ENCODE measurements at regions of chr1 and their contacts with region 1.

Region 1: GRCh38 chr1:214002472-214002871 is 14.7 kb downstream of the PROX1 start:
- DNase-seq: peak; percentile 58
- H3K4me3 Mint-ChIP-seq: no peak overlapping the region
- H3K27ac Mint-ChIP-seq: no peak overlapping the region
- H3K4me1 Mint-ChIP-seq: peaks cover 6% of the 10 kb centered on the region
- H3K27me3 Mint-ChIP-seq: peaks cover 55% of the 10 kb centered on the region
- CTCF ChIP-seq: no peak

Region 2: GRCh38 chr1:213772128-213773063 is 230.1 kb before region 1 on chr1:
- CTCF ChIA-PET with region 1: no interaction called
- POLR2A ChIA-PET with region 1: no interaction called
- intact Hi-C with region 1: no loop called
- DNase-seq: no peak
- H3K4me3 Mint-ChIP-seq: no peak overlapping the region
- H3K27ac Mint-ChIP-seq: no peak overlapping the region
- H3K4me1 Mint-ChIP-seq: no peaks in the 10 kb centered on the region
- H3K27me3 Mint-ChIP-seq: peaks cover 43% of the 10 kb centered on the region
- CTCF ChIP-seq: no peak

Region 3: GRCh38 chr1:213934642-213935041 is 67.8 kb before region 1 on chr1:
- CTCF ChIA-PET with region 1: no interaction called
- POLR2A ChIA-PET with region 1: no interaction called
- intact Hi-C with region 1: no loop called
- DNase-seq: peak; percentile 95
- H3K4me3 Mint-ChIP-seq: no peak overlapping the region
- H3K27ac Mint-ChIP-seq: no peak overlapping the region
- H3K4me1 Mint-ChIP-seq: peaks cover 13% of the 10 kb centered on the region
- H3K27me3 Mint-ChIP-seq: peaks cover 100% of the 10 kb centered on the region
- CTCF ChIP-seq: no peak

Region 4: GRCh38 chr1:213987927-213988506 is 14.5 kb before region 1 on chr1 and contains the start of gene PROX1:
- CTCF ChIA-PET with region 1: interaction called, 8 read pairs
- POLR2A ChIA-PET with region 1: interaction called, 31 read pairs
- intact Hi-C with region 1: no loop called
- DNase-seq: peak; percentile 86
- H3K4me3 Mint-ChIP-seq: peak within 1 kb of the TSS; percentile 92
- H3K27ac Mint-ChIP-seq: peak within 1 kb of the TSS; percentile 88
- H3K4me1 Mint-ChIP-seq: peaks cover 15% of the 10 kb centered on the region
- H3K27me3 Mint-ChIP-seq: peaks cover 97% of the 10 kb centered on the region
- CTCF ChIP-seq: no peak
- total RNA-seq, gene PROX1: 0.61 TPM in 2 replicates

Region 5: GRCh38 chr1:214076708-214077065 is 74.2 kb after region 1 on chr1:
- CTCF ChIA-PET with region 1: no interaction called
- POLR2A ChIA-PET with region 1: no interaction called
- intact Hi-C with region 1: no loop called
- DNase-seq: no peak
- H3K4me3 Mint-ChIP-seq: no peak overlapping the region
- H3K27ac Mint-ChIP-seq: no peak overlapping the region
- H3K4me1 Mint-ChIP-seq: peaks cover 7% of the 10 kb centered on the region
- H3K27me3 Mint-ChIP-seq: peaks cover 90% of the 10 kb centered on the region
- CTCF ChIP-seq: no peak

Region 6: GRCh38 chr1:214107322-214108096 is 105.0 kb after region 1 on chr1:
- CTCF ChIA-PET with region 1: no interaction called
- POLR2A ChIA-PET with region 1: no interaction called
- intact Hi-C with region 1: no loop called
- DNase-seq: no peak
- H3K4me3 Mint-ChIP-seq: no peak overlapping the region
- H3K27ac Mint-ChIP-seq: no peak overlapping the region
- H3K4me1 Mint-ChIP-seq: peaks cover 5% of the 10 kb centered on the region
- H3K27me3 Mint-ChIP-seq: no peaks in the 10 kb centered on the region
- CTCF ChIP-seq: no peak

Measured in MCF 10A (cell line).